MCF 10A (cell line): ENCODE measurements at regions of chrX and their contacts with region 1.

Region 1: DNA sequence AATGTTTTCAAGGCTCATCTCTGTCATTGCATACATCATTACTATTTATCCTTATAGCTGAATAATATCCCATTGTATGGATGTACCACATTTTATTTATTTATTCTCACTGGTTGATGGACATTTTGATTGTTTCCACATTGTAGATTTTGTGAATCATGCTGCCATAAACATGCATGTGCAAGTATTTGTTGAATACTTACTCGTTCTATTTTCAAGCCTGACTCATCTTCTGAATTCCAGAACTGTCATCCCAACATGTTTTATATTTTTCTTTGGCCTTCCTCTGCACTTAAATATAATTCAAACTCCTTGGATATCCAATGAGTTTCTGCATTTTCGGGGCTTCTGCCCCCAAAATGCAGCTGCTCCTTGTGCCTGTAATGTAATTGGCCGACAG is 77.6 kb downstream of the MXRA5 start:
- DNase-seq: peak; percentile 67
- H3K4me3 Mint-ChIP-seq: no peak overlapping the region
- H3K27ac Mint-ChIP-seq: peak overlapping the region; percentile 14
- H3K4me1 Mint-ChIP-seq: peaks cover 47% of the 10 kb centered on the region
- H3K27me3 Mint-ChIP-seq: no peaks in the 10 kb centered on the region
- CTCF ChIP-seq: no peak

Region 2: GRCh38 chrX:2793752-2794151 is 475.1 kb before region 1 on chrX:
- CTCF ChIA-PET with region 1: no interaction called
- POLR2A ChIA-PET with region 1: no interaction called
- intact Hi-C with region 1: no loop called
- DNase-seq: no peak
- H3K4me3 Mint-ChIP-seq: no peak overlapping the region
- H3K27ac Mint-ChIP-seq: no peak overlapping the region
- H3K4me1 Mint-ChIP-seq: peaks cover 5% of the 10 kb centered on the region
- H3K27me3 Mint-ChIP-seq: peaks cover 29% of the 10 kb centered on the region
- CTCF ChIP-seq: no peak

Region 3: GRCh38 chrX:3286196-3286945 is 17.5 kb after region 1 on chrX:
- CTCF ChIA-PET with region 1: interaction called, 10 read pairs
- POLR2A ChIA-PET with region 1: interaction called, 16 read pairs
- intact Hi-C with region 1: no loop called
- DNase-seq: peak; percentile 85
- H3K4me3 Mint-ChIP-seq: peak overlapping the region; percentile 61
- H3K27ac Mint-ChIP-seq: peak overlapping the region; percentile 6
- H3K4me1 Mint-ChIP-seq: peaks cover 34% of the 10 kb centered on the region
- H3K27me3 Mint-ChIP-seq: no peaks in the 10 kb centered on the region
- CTCF ChIP-seq: no peak

Region 4: GRCh38 chrX:3307881-3308280 is 39.1 kb after region 1 on chrX:
- CTCF ChIA-PET with region 1: no interaction called
- POLR2A ChIA-PET with region 1: no interaction called
- intact Hi-C with region 1: no loop called
- DNase-seq: no peak
- H3K4me3 Mint-ChIP-seq: no peak overlapping the region
- H3K27ac Mint-ChIP-seq: no peak overlapping the region
- H3K4me1 Mint-ChIP-seq: no peaks in the 10 kb centered on the region
- H3K27me3 Mint-ChIP-seq: no peaks in the 10 kb centered on the region
- CTCF ChIP-seq: no peak